MCF 10A (cell line): ENCODE measurements at regions of chr12 and their contacts with region 1.

Region 1: DNA sequence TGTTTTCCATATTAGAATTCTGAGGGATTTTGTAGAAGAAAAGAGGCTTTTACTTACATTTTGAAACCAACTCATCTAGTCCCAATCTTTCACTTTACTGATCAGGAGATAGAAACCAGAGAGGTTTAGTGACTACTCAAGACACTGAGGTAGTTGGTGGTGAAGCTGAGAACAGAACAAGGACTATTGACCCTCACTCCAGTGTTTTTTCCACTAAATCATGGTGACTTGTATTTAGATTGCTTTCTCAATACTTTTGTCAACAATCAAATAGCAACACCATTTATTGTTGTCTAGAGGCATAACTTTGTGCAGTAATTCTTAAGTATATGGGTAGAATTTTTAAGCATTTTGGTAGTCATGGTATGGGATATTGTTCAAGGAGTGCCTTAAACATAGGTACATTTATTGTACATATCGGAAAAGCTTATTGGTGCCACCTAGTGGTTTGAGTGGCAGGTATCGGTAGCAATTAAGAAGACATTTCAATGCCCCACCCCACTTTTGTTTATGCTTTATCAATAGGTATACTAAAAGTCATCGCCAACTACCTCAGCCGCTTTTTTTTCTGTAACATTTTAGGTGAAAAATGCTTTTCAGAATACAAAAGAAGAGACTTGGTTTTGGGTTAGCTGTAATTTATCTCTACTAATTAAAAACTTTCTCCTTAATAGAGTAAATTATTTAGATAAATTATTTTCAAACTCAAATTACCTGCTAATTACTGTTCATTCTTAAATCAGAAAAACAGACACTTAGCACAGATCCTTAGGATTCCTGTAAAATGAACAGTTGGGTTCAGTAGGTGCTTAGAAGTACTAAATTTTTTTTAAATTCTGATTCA is 47.3 kb upstream of the PAWR start:
- DNase-seq: peak; percentile 80
- H3K4me3 Mint-ChIP-seq: no peak overlapping the region
- H3K27ac Mint-ChIP-seq: no peak overlapping the region
- H3K4me1 Mint-ChIP-seq: no peaks in the 10 kb centered on the region
- H3K27me3 Mint-ChIP-seq: no peaks in the 10 kb centered on the region
- CTCF ChIP-seq: peak; percentile 62

Region 2: GRCh38 chr12:79407671-79408622 is 330.1 kb before region 1 on chr12:
- CTCF ChIA-PET with region 1: interaction called, 3 read pairs
- POLR2A ChIA-PET with region 1: interaction called, 3 read pairs
- intact Hi-C with region 1: loop called (anchors 1 kb)
- DNase-seq: peak; percentile 89
- H3K4me3 Mint-ChIP-seq: no peak overlapping the region
- H3K27ac Mint-ChIP-seq: peak overlapping the region; percentile 54
- H3K4me1 Mint-ChIP-seq: peaks cover 13% of the 10 kb centered on the region
- H3K27me3 Mint-ChIP-seq: no peaks in the 10 kb centered on the region
- CTCF ChIP-seq: peak; percentile 75

Region 3: DNA sequence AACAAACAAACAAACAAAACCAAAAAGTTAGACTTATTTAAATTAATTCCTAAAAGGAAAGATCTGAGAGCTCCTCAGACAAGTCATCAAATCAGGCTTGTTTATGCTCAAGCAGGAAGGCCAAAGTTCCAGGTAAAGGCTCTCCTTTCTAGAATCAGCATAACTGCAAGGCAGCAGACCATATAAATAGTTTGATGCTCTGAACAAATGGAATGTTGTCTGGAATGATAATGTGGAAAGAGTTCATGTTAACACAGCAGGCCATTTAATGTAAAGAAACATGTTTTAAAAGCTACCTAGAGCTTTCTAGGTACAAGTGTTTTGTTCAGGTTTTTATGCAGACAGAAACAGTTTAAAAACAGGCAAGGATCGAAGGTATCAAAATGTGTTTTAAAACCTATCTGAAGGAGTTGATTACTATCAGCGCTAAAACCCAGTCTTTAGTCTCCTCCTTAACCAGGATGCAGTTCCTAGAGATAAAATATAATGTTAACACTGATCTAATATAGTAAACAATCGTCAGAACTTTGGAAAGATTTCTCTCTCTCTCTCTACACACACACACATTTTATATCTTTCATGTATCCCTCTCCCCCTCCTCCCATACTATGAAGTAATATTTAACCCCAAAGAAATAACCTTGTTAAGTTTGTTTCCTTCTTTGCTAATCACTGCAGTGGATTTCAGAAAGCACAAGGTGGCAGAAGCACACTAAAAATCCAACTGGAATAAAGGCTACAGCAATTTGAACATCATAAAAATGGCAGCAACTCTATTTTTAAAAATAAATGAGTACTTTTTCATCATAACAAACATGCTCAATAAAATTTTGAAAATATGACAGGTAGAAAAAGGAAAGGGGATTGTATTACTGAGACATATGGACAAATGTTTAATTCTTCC is 182.8 kb before region 1 on chr12:
- CTCF ChIA-PET with region 1: interaction called, 6 read pairs
- POLR2A ChIA-PET with region 1: interaction called, 3 read pairs
- intact Hi-C with region 1: loop called (anchors 1 kb)
- DNase-seq: peak; percentile 49
- H3K4me3 Mint-ChIP-seq: no peak overlapping the region
- H3K27ac Mint-ChIP-seq: peak overlapping the region; percentile 32
- H3K4me1 Mint-ChIP-seq: peaks cover 16% of the 10 kb centered on the region
- H3K27me3 Mint-ChIP-seq: no peaks in the 10 kb centered on the region
- CTCF ChIP-seq: peak; percentile 41